PC-3 (cell line): ENCODE measurements at regions of chr1 and their contacts with region 1.

Region 1: DNA sequence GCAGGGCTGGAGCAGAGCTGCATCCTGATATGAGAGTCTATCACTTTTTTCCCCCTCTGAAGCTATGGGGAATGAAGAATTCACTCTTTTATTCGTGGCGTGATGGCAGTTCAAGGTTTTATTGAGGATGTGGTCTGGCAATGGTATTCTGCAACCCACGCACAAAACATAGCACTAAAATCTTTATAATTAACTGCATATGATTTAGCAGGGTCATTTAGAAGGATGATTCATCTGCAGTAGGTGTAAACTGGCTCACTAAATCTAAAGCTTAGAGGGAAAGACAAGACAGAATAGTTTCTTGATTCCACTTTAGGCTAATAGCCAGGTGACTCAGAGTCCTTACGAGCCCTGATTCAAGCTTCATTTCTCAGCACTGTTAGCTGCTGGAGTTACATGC is 25.0 kb upstream of the CHRM3 start:
- DNase-seq: peak; percentile 84
- ATAC-seq: peak; percentile 90
- H3K4me3 ChIP-seq: peak overlapping the region; percentile 8; the same call in 1 of the 2 replicates
- H3K27ac ChIP-seq: no peak overlapping the region
- H3K4me1 ChIP-seq: peaks cover 19% of the 10 kb centered on the region
- H3K27me3 ChIP-seq: no peaks in the 10 kb centered on the region
- CTCF ChIP-seq: no peak

Region 2: DNA sequence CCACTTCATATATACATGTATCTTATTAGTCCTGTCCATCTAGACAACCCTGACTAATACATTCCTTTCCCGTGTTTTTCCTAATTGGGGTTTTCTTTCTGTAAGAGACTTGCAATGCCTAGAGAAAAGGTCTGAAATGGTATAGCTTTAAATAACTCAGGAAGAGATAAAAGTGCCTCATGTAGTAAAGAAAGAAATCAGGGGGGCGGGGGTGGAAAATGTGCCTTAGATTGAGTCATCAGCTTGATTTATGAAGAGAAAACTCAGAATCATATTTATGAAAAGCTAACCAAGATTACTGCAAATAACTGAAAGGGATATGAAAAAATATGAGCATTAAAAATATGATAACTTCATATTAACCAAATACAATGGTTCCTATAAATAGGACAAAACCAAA is 320.9 kb before region 1 on chr1:
- CTCF ChIA-PET with region 1: no interaction called
- POLR2A ChIA-PET with region 1: no interaction called
- intact Hi-C with region 1: loop called (anchors 10 kb)
- DNase-seq: no peak
- ATAC-seq: peak; percentile 50
- H3K4me3 ChIP-seq: no peak overlapping the region
- H3K27ac ChIP-seq: no peak overlapping the region
- H3K4me1 ChIP-seq: no peaks in the 10 kb centered on the region
- H3K27me3 ChIP-seq: no peaks in the 10 kb centered on the region
- CTCF ChIP-seq: no peak

Region 3: GRCh38 chr1:239315631-239316217 is 45.7 kb before region 1 on chr1:
- CTCF ChIA-PET with region 1: no interaction called
- POLR2A ChIA-PET with region 1: no interaction called
- intact Hi-C with region 1: loop called (anchors 2 kb)
- DNase-seq: no peak
- ATAC-seq: peak; percentile 74
- H3K4me3 ChIP-seq: peak overlapping the region; percentile 54
- H3K27ac ChIP-seq: no peak overlapping the region
- H3K4me1 ChIP-seq: no peaks in the 10 kb centered on the region
- H3K27me3 ChIP-seq: no peaks in the 10 kb centered on the region
- CTCF ChIP-seq: no peak

Region 4: DNA sequence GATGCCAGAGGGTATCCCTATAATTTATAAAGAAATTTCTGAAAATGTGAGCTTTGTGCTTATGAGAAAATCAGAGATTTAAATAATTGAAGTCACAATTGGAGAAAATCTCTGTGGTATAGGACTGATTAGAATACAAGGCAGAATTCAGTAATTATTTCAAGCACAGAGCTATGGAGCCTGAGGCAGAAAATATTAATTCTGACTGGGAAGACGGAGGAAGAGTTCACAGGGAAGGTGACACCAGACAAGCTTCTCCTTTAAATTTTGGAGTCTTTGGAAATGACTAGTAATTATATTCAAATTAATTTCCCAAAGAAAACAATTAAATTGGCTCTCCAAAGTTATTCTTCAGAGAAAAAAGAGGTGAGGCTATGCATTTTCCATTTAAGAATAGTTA is 146.4 kb after region 1 on chr1:
- CTCF ChIA-PET with region 1: interaction called, 11 read pairs
- POLR2A ChIA-PET with region 1: no interaction called
- intact Hi-C with region 1: no loop called
- DNase-seq: no peak
- ATAC-seq: no peak
- H3K4me3 ChIP-seq: no peak overlapping the region
- H3K27ac ChIP-seq: no peak overlapping the region
- H3K4me1 ChIP-seq: no peaks in the 10 kb centered on the region
- H3K27me3 ChIP-seq: no peaks in the 10 kb centered on the region
- CTCF ChIP-seq: no peak